ENCODE measurements at regions of chr1 and their contacts with region 1.

Region 1: DNA sequence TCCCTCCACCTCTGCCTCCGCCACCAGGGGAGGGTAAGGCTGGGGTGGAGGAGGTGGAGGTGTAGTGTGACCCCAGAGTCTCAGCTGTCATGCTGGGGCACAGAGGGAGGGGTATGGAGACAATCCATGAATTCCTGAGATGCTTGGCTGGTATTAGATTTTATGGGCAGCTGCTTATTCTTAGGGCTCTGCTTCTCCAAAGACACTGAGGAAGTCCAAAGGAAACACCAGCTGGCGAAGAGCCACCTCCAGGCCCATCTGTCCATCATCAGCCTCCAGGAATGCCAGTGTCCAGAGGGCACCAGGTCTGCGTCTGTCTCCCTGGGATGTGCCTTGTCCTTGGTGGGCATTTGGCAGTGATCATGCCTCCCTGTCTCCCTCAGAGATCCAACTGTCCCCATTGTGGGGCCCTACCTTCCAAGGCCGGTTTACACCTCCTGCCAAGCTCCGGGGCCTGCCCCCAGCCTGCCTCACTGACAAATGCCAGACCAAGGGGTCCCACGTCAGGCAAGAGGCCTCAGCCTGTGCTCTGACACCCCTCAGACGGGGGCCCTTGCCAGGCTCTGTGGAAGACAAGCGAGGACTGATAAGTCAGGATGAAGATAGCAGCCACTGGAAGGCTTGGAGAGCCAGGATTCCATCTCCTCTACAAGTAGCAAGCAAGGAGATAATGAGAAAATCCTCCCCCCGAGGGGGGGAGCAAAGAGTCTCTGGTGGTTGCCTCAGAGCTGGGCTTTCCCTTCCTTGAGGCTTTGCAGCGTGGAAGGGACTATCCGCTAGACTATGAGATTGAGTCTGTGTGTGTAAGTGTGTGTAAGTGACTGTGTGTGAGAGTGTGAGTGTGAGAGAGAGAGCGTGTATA is 1.6 kb downstream of the TNNI1 start:
- DNase-seq: no peak
- H3K4me3 ChIP-seq: no peak overlapping the region
- H3K27ac ChIP-seq: no peak overlapping the region
- H3K4me1 ChIP-seq: no peaks in the 10 kb centered on the region
- H3K27me3 ChIP-seq: no peaks in the 10 kb centered on the region
- CTCF ChIP-seq: no peak

Region 2: DNA sequence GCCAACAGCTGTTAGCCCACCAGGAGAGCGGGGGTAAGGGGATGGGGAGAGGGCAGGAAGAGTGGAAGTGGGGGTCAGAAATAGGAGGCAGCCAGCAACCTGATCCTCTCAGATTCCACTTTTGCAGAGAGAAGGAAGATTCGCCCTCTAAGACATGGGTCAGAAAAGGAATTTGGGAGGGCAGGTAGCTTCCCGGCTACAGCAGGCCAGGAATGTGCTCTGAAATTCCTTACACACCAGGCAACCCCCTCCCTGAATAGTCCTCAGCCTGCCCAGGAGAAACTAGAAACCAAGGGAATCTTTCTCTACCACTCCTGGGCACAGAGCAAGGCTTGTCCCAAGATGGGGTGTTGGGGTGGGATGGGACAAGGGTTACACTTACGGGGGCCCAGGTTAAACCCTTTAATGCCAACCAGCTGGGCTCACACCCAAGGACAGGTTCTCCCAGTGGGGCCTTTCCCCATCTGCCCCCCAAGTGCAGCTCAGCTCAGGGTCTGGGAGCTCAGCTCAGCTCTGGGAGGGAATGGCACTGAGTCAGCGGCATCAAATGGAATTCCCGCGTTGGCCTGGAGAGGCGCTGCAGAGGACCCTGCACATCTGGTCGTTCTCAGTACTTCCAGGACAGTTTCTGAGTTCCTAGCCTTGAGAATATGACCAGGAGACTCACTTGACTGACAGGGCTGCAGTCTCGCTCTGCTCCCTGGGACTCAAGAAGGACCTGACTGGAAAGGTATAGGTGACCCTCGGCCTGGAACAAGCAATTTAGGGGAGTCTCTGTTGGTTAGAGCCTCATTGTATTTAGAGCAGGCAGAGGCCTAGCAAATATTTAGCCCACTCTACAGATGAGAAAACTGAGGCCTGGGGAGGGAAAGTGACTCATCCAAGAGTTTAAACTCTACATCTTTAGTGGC is 43.3 kb before region 1 on chr1:
- CTCF ChIA-PET with region 1: no interaction called
- dilution Hi-C with region 1: loop called (anchors 5 kb)
- in situ Hi-C with region 1: no loop called
- intact Hi-C with region 1: no loop called
- DNase-seq: peak; percentile 43
- H3K4me3 ChIP-seq: no peak overlapping the region
- H3K27ac ChIP-seq: no peak overlapping the region
- H3K4me1 ChIP-seq: no peaks in the 10 kb centered on the region
- H3K27me3 ChIP-seq: no peaks in the 10 kb centered on the region
- CTCF ChIP-seq: peak in 1 of 2 donors; percentile 33

Measured in mammary epithelial cell (primary cell).